Activated naive CD4-positive, alpha-beta T cell treated with anti-CD3 and anti-CD28 coated beads for 36 hours (primary cell): ENCODE measurements at regions of chr5 and their contacts with region 1.

Region 1: GRCh38 chr5:113513384-113514288 is at the start of gene YTHDC2:
- DNase-seq: peak; percentile 90
- H3K4me3 Mint-ChIP-seq: peak within 1 kb of the TSS; percentile 91
- H3K27ac Mint-ChIP-seq: peak within 1 kb of the TSS; percentile 88
- H3K4me1 Mint-ChIP-seq: peaks cover 27% of the 10 kb centered on the region
- H3K27me3 Mint-ChIP-seq: peaks cover 5% of the 10 kb centered on the region
- total RNA-seq, gene YTHDC2: 24.4 to 28.0 TPM

Region 2: GRCh38 chr5:112976432-112977309 is 537.0 kb before region 1 on chr5 and contains the start of gene DCP2:
- CTCF ChIA-PET with region 1: no interaction called
- intact Hi-C with region 1: loop called (anchors 1 kb)
- DNase-seq: peak; percentile 96
- H3K4me3 Mint-ChIP-seq: peak within 1 kb of the TSS; percentile 96
- H3K27ac Mint-ChIP-seq: peak within 1 kb of the TSS; percentile 95
- H3K4me1 Mint-ChIP-seq: peaks cover 38% of the 10 kb centered on the region
- H3K27me3 Mint-ChIP-seq: no peaks in the 10 kb centered on the region
- total RNA-seq, gene DCP2: 129 TPM

Region 3: DNA sequence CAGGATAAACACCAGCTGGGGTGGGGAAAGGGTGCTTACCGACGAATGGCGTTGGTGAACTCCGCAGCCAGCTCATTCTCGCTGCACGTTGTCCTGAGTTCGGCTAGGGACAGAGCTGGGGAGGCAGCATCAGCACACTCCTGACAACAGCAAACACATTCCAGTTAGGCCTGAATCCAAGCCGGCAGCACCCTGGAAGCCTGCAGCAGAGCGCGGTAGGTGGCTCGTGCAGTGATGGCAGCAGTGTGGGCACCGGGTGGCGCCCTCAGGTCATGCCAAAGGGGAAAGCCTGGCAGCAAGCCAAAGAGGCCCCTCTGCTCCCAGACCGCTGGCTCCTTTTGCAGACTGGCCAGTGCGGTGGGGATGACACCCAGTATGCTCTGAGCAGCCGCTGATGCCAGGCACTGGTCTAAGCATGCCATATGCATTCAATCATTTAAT is 470.1 kb before region 1 on chr5:
- CTCF ChIA-PET with region 1: no interaction called
- intact Hi-C with region 1: loop called (anchors 5 kb)
- DNase-seq: peak; percentile 38
- H3K4me3 Mint-ChIP-seq: no peak overlapping the region
- H3K27ac Mint-ChIP-seq: no peak overlapping the region
- H3K4me1 Mint-ChIP-seq: no peaks in the 10 kb centered on the region
- H3K27me3 Mint-ChIP-seq: no peaks in the 10 kb centered on the region

Region 4: GRCh38 chr5:113330533-113331208 is 183.0 kb before region 1 on chr5:
- CTCF ChIA-PET with region 1: interaction called, 30 read pairs
- intact Hi-C with region 1: loop called (anchors 1 kb)
- DNase-seq: peak; percentile 14
- H3K4me3 Mint-ChIP-seq: no peak overlapping the region
- H3K27ac Mint-ChIP-seq: no peak overlapping the region
- H3K4me1 Mint-ChIP-seq: peaks cover 16% of the 10 kb centered on the region
- H3K27me3 Mint-ChIP-seq: no peaks in the 10 kb centered on the region

Region 5: GRCh38 chr5:113397046-113397445 is 116.6 kb before region 1 on chr5:
- CTCF ChIA-PET with region 1: no interaction called
- intact Hi-C with region 1: no loop called
- DNase-seq: no peak
- H3K4me3 Mint-ChIP-seq: no peak overlapping the region
- H3K27ac Mint-ChIP-seq: no peak overlapping the region
- H3K4me1 Mint-ChIP-seq: no peaks in the 10 kb centered on the region
- H3K27me3 Mint-ChIP-seq: no peaks in the 10 kb centered on the region

Region 6: DNA sequence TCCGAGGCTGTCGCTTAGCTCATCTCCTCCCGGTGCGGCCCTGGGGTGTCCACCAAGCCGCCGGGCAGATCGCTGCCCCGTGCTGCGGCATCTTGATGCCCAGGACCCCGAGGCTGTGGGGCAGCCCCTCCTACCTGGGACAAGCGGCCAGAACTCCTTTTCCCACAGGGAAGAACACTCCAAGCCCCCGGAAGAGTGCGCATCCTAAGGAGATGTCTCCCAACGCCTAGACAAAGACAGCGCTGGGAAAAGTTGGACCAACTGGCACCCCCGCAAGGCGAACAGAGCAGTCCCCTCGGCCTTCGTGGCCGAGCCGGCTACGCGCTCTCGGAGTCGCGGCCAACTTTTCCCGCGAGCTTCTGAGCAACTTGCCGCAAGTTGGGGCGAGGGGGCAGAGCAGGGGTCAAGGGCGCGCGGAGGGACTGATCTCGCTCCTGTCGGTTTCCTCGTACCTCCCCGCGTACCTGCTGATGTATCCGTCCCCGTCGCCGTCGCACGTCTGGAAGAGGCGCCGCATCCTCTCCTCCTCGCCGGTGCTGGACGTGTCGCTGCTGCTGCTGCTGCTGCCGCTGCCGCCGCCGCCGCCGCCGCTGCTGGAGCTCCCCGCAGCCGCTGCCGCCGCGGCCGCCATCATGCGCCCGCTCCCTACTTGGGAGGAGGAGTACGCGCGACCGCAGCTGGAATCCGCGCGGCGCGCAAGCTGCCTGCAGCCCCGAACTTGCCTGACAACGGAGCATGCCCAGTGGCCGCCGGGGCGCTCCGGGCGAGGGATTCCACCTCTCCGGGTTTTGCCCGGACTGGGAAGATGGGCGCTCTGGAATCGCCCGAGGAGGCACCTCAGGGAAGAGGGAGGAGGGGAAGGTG is 25.6 kb before region 1 on chr5 and contains the start of gene MCC:
- CTCF ChIA-PET with region 1: interaction called, 3 read pairs
- intact Hi-C with region 1: loop called (anchors 1 kb)
- DNase-seq: peak; percentile 49
- H3K4me3 Mint-ChIP-seq: peak within 1 kb of the TSS; percentile 75
- H3K27ac Mint-ChIP-seq: no peak within 1 kb of the TSS
- H3K4me1 Mint-ChIP-seq: peaks cover 9% of the 10 kb centered on the region
- H3K27me3 Mint-ChIP-seq: peaks cover 62% of the 10 kb centered on the region
- total RNA-seq, gene MCC: 0.62 to 0.81 TPM